ENCODE measurements at regions of chr6 and their contacts with region 1.

Region 1: DNA sequence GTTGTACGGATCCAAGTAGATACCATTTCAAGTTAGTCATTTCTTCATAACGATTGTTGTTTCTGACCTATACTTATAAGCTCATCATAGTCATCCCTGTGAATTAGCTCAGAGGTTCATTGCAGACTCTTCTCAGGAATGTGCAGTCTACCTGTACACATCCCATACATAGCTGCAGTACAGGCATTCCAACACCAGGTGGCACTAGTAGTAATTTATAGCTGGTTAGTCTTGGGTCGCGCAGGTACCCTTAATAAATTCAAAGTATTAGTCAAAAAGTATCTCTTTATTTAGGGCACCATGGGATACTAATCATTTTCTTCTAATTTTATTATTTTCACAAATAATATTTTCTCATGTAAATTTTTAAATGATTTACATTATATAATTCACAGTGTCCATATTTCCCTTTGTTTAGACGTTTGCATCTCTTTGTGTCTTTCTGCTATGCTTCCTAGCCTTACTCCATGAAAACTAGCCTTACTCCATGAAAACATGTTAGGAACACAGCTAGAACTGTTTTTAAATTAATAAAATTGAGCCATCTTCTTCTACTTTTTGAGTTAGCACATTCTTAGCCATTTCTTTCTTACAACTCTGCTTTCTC is 128.6 kb upstream of the FAM83B start:
- DNase-seq: peak in 3 of 5 donors; percentile 15 to 35 (median 25)
- ATAC-seq: peak in 2 of 4 donors; percentile 45 to 52
- H3K4me3 ChIP-seq: no peak overlapping the region
- H3K27ac ChIP-seq: no peak overlapping the region
- H3K4me1 ChIP-seq: no peaks in the 10 kb centered on the region
- H3K27me3 ChIP-seq: no peaks in the 10 kb centered on the region
- CTCF ChIP-seq: peak; percentile 69 to 87 (median 80)
- POLR2A ChIP-seq: no peak

Region 2: DNA sequence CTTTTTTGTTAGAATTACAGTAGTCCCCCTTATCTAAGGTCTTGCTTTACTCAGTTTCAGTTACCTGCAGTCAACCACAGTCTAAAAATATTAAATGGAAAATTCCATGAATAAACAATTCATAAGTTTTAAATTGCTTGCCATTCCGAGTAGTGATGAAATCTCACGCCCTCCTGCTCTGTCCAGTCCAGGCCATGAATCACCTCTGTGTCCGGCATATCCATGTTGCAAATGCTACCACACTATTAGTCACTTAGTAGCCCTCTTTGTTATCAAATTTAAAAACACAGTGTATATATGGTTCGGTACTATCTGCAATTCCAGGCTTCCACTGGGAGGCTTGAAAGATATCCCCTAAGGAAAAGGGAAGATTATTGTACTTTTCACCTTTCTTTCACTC is 36.0 kb before region 1 on chr6:
- intact Hi-C with region 1: no loop called
- DNase-seq: no peak
- ATAC-seq: peak in 2 of 4 donors; percentile 51 to 59
- H3K4me3 ChIP-seq: no peak overlapping the region
- H3K27ac ChIP-seq: no peak overlapping the region
- H3K4me1 ChIP-seq: no peaks in the 10 kb centered on the region
- H3K27me3 ChIP-seq: no peaks in the 10 kb centered on the region
- CTCF ChIP-seq: no peak
- POLR2A ChIP-seq: no peak

Region 3: DNA sequence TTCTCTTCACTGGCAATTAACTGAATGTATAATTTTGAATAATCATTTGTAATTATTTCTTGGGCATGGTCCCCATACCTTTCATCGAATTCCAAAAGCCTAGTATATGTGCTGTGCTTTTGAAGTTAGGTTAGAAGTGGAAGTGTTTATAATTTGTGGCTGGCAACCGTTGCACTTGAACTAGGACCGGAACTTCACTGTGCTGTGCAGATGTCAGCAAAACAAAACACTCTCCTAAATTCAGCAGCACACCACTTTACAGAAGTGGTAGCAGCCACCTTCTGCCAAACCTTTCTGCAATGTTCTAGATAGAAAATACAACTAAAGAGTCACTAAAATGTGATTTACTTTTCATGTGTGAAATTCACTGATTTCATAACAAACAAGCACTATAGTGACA is 240.5 kb after region 1 on chr6:
- intact Hi-C with region 1: loop called in 1 of 10 experiments (anchors 10 kb)
- DNase-seq: peak in 1 of 5 donors; percentile 21
- ATAC-seq: peak; percentile 50 to 91 (median 72)
- H3K4me3 ChIP-seq: no peak overlapping the region
- H3K27ac ChIP-seq: peak overlapping the region in 1 of 12 donors; percentile 41
- H3K4me1 ChIP-seq: peaks cover 0 to 4% (median 0%) of the 10 kb centered on the region in 12 donors
- H3K27me3 ChIP-seq: no peaks in the 10 kb centered on the region
- CTCF ChIP-seq: no peak
- POLR2A ChIP-seq: no peak

Region 4: DNA sequence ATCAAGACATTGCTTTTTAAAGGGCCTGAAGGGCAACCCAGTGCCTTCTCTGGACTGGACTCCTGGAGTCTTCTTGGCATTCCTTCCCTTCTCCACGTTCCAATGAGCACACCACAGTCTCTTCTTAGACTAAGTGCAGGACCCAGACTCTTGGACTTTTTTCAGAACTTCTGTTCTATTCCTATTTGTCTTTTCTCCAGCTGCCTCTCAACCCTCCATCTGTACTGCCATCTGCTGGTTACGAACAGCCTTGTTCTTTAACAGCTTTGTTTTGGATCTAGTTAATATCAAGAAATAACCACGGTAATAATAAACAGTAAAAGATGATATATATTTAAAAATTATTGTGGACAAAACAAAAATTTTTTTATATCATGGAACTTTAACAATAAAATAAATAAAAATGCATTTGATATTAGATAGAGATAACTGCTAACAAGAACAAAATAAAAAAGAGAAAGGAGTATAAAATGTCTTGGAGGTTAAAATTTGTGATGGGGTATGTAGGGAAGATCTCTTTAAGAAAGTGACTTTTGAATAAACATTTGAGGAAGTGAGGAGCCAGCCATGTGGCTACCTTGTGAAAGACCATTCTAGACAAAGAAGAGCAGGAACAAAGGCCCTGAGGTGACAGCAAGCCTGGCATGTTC is 351.3 kb after region 1 on chr6:
- intact Hi-C with region 1: loop called in 8 of 10 experiments (anchors 2 to 10 kb)
- DNase-seq: no peak
- ATAC-seq: peak in 2 of 4 donors; percentile 38 to 39
- H3K4me3 ChIP-seq: no peak overlapping the region
- H3K27ac ChIP-seq: no peak overlapping the region
- H3K4me1 ChIP-seq: peaks cover 0 to 5% (median 0%) of the 10 kb centered on the region in 12 donors
- H3K27me3 ChIP-seq: no peaks in the 10 kb centered on the region
- CTCF ChIP-seq: peak; percentile 34 to 65 (median 51)
- POLR2A ChIP-seq: no peak

Region 5: DNA sequence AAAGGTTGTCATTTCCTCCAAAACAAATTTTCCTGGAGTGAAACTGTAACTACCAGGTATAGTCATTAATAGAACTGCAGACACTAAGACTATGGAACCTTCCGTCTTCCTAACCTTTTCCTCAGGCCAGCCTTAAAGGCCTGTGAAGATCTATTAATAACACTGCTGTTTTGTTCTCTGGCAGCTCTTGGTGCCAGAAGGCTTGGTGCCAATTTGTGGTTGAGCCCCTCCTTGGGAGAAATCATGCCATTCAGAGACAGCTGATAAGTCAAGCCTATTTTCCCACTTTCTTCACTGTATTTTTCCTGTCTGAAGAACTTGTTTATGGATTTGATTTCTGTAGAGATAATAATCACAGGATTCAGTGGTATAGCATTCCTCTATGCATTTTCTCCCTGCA is 521.1 kb after region 1 on chr6:
- intact Hi-C with region 1: loop called in 3 of 10 experiments (anchors 10 kb)
- DNase-seq: peak in 1 of 5 donors; percentile 26
- ATAC-seq: peak in 2 of 4 donors; percentile 42 to 52
- H3K4me3 ChIP-seq: no peak overlapping the region
- H3K27ac ChIP-seq: no peak overlapping the region
- H3K4me1 ChIP-seq: no peaks in the 10 kb centered on the region
- H3K27me3 ChIP-seq: no peaks in the 10 kb centered on the region
- CTCF ChIP-seq: no peak
- POLR2A ChIP-seq: no peak

Measured in heart left ventricle (tissue), 16 donors.